Testis (tissue), 5 donors: ENCODE measurements at regions of chr4 and their contacts with region 1.

Region 1: DNA sequence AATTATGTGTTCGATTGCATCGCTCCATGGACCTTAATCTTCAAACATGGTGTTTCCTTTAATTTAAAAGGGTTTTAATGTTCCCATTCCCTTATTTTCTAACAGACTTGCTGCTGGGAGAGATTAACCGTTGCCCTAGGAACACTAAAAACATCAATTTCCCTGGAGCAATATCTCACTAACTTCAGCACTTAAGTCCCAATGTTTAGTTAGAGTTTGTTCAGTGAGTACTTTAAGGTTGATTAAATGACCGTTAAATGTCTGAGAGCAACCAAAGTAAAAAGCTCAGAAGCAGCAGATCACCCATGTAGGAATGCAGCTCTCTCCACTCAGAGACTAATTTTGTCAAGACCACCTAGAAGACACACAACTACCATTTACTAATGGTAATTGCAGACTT is 111.2 kb upstream of the PDE5A start:
- DNase-seq: no peak
- H3K4me3 ChIP-seq: no peak overlapping the region
- H3K27ac ChIP-seq: no peak overlapping the region
- H3K4me1 ChIP-seq: no peaks in the 10 kb centered on the region
- H3K27me3 ChIP-seq: no peaks in the 10 kb centered on the region
- CTCF ChIP-seq: no peak
- POLR2A ChIP-seq: no peak

Region 2: GRCh38 chr4:119646347-119647071 is 93.3 kb before region 1 on chr4:
- intact Hi-C with region 1: loop called (anchors 5 kb)
- DNase-seq: peak; percentile 70
- H3K4me3 ChIP-seq: no peak overlapping the region
- H3K27ac ChIP-seq: no peak overlapping the region
- H3K4me1 ChIP-seq: no peaks in the 10 kb centered on the region
- H3K27me3 ChIP-seq: no peaks in the 10 kb centered on the region
- CTCF ChIP-seq: no peak
- POLR2A ChIP-seq: no peak

Region 3: GRCh38 chr4:119906277-119906676 is 166.5 kb after region 1 on chr4:
- intact Hi-C with region 1: no loop called
- DNase-seq: no peak
- H3K4me3 ChIP-seq: no peak overlapping the region
- H3K27ac ChIP-seq: no peak overlapping the region
- H3K4me1 ChIP-seq: no peaks in the 10 kb centered on the region
- H3K27me3 ChIP-seq: no peaks in the 10 kb centered on the region
- CTCF ChIP-seq: no peak
- POLR2A ChIP-seq: no peak